ENCODE measurements at regions of chr22 and their contacts with region 1.

Region 1: DNA sequence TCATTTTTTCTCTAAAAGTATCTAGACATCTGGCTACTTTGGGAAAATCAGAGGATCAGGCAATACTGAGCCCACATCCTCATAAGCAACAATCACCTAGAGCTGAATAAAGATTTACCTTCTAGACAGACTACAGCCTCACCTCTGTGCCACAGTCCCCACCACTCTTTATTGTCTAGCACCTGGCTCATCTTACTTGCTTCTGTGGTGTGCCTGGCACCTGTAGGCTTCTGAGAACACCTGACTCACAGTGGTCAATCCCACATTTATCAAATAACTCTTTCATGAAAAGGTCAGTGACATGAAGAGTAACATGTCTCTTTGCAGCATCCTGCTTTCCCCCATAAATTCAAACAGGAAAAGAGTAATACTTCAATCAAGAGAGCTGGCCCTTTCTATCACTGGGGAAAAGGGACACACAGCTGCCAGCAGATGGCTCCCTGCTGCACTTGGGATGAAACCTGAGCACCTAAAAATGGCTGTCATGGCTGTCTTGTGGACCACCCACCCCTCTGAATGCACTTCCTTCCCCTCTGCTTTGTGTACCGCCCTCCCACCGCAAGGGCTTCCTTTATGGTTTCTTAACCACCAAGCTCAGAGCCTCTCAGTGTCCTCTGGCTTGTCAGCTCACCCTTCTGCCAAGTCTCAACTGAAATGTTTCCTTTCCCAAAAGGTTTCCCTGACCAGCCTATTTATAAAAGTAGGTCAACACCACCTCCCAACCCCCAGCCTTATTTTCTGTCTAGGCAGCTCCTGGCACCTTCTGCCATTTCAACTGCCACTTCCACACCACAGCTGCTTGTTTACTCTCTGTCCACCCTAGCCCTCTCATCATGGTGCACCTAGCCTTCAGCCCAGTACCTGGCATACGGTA is 9.3 kb downstream of the TFIP11 start:
- DNase-seq: peak; percentile 24 to 91 (median 64)
- ATAC-seq: peak; percentile 93
- H3K4me3 ChIP-seq: no peak overlapping the region
- H3K4me3 Mint-ChIP-seq: peak overlapping the region; percentile 66
- H3K27ac ChIP-seq: peak overlapping the region in 1 of 2 experiments; percentile 55
- H3K27ac Mint-ChIP-seq: peak overlapping the region; percentile 88
- H3K4me1 ChIP-seq: peaks cover 17% of the 10 kb centered on the region
- H3K4me1 Mint-ChIP-seq: peaks cover 24% of the 10 kb centered on the region
- H3K27me3 ChIP-seq: no peaks in the 10 kb centered on the region
- H3K27me3 Mint-ChIP-seq: no peaks in the 10 kb centered on the region
- CTCF ChIP-seq: peak; percentile 42

Region 2: GRCh38 chr22:26416256-26416655 is 86.7 kb before region 1 on chr22:
- CTCF ChIA-PET with region 1: no interaction called
- POLR2A ChIA-PET with region 1: no interaction called
- intact Hi-C with region 1: no loop called
- DNase-seq: no peak
- ATAC-seq: no peak
- H3K4me3 ChIP-seq: no peak overlapping the region
- H3K4me3 Mint-ChIP-seq: no peak overlapping the region
- H3K27ac ChIP-seq: no peak overlapping the region
- H3K27ac Mint-ChIP-seq: no peak overlapping the region
- H3K4me1 ChIP-seq: no peaks in the 10 kb centered on the region
- H3K4me1 Mint-ChIP-seq: no peaks in the 10 kb centered on the region
- H3K27me3 ChIP-seq: no peaks in the 10 kb centered on the region
- H3K27me3 Mint-ChIP-seq: peaks cover 20% of the 10 kb centered on the region
- CTCF ChIP-seq: no peak

Region 3: DNA sequence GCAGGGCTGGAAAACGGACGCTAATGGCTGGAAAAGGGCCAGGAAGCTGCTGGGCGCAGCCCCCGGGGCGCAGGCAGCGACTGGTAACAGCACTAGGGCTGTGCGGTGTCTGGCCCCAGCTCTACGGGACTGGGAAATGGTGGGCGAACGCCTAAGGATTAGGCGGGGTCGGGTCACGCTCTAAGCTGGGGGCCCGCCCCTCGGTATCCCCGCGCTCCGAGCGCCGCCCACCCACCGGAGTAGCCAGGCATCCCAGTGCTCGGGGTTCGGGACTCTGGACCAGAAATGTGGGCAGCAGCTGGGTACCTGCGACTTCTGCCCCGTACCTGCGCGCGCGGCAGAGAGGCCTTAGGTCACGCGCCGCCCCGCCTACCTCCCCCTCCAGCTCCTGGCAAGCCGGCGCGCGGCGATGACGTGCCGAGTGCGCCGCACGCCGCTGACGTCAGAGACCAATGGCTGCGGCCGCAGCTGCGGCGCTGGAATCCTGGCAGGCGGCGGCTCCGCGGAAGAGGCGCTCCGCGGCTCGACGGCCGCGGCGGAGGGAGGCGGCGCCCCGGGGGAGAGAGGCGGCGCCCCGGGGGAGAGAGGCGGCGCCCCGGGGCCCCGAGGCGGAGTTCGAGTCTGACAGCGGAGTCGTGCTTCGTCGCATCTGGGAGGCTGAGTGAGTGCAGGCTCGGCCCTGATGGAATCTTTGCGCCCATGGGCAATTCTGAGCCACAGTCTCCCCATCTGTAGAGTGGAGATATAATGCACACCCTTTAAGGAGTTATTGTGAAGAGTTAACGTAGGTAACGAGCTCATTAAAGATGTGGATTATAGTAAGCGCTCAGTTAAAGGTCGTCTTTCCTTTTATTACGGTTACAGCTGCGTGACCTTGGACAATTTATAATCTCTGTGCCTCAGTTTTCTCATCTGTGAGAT is 19.2 kb before region 1 on chr22 and contains the starts of genes HPS4 and SRRD:
- CTCF ChIA-PET with region 1: interaction called, 10 read pairs
- POLR2A ChIA-PET with region 1: interaction called, 12 read pairs
- intact Hi-C with region 1: no loop called
- DNase-seq: peak; percentile 87 to 97 (median 93)
- ATAC-seq: peak; percentile 83
- H3K4me3 ChIP-seq: peak within 1 kb of the TSS; percentile 78 to 97
- H3K4me3 Mint-ChIP-seq: peak within 1 kb of the TSS; percentile 95
- H3K27ac ChIP-seq: peak within 1 kb of the TSS; percentile 85 to 94
- H3K27ac Mint-ChIP-seq: peak within 1 kb of the TSS; percentile 99
- H3K4me1 ChIP-seq: peaks cover 53% of the 10 kb centered on the region
- H3K4me1 Mint-ChIP-seq: peaks cover 69% of the 10 kb centered on the region
- H3K27me3 ChIP-seq: no peaks in the 10 kb centered on the region
- H3K27me3 Mint-ChIP-seq: no peaks in the 10 kb centered on the region
- CTCF ChIP-seq: no peak
- total RNA-seq, gene HPS4: 67.0 to 71.0 TPM
- total RNA-seq, gene SRRD: 22.1 to 24.1 TPM

Region 4: GRCh38 chr22:26492220-26492619 is 10.7 kb before region 1 on chr22:
- CTCF ChIA-PET with region 1: interaction called, 19 read pairs
- POLR2A ChIA-PET with region 1: interaction called, 3 read pairs
- intact Hi-C with region 1: no loop called
- DNase-seq: no peak
- ATAC-seq: no peak
- H3K4me3 ChIP-seq: no peak overlapping the region
- H3K4me3 Mint-ChIP-seq: no peak overlapping the region
- H3K27ac ChIP-seq: no peak overlapping the region
- H3K27ac Mint-ChIP-seq: no peak overlapping the region
- H3K4me1 ChIP-seq: no peaks in the 10 kb centered on the region
- H3K4me1 Mint-ChIP-seq: no peaks in the 10 kb centered on the region
- H3K27me3 ChIP-seq: no peaks in the 10 kb centered on the region
- H3K27me3 Mint-ChIP-seq: no peaks in the 10 kb centered on the region
- CTCF ChIP-seq: no peak

Region 5: GRCh38 chr22:26524870-26525269 is 21.9 kb after region 1 on chr22:
- CTCF ChIA-PET with region 1: interaction called, 12 read pairs
- POLR2A ChIA-PET with region 1: no interaction called
- intact Hi-C with region 1: no loop called
- DNase-seq: no peak
- ATAC-seq: no peak
- H3K4me3 ChIP-seq: no peak overlapping the region
- H3K4me3 Mint-ChIP-seq: no peak overlapping the region
- H3K27ac ChIP-seq: no peak overlapping the region
- H3K27ac Mint-ChIP-seq: no peak overlapping the region
- H3K4me1 ChIP-seq: no peaks in the 10 kb centered on the region
- H3K4me1 Mint-ChIP-seq: no peaks in the 10 kb centered on the region
- H3K27me3 ChIP-seq: no peaks in the 10 kb centered on the region
- H3K27me3 Mint-ChIP-seq: no peaks in the 10 kb centered on the region
- CTCF ChIP-seq: no peak

Region 6: DNA sequence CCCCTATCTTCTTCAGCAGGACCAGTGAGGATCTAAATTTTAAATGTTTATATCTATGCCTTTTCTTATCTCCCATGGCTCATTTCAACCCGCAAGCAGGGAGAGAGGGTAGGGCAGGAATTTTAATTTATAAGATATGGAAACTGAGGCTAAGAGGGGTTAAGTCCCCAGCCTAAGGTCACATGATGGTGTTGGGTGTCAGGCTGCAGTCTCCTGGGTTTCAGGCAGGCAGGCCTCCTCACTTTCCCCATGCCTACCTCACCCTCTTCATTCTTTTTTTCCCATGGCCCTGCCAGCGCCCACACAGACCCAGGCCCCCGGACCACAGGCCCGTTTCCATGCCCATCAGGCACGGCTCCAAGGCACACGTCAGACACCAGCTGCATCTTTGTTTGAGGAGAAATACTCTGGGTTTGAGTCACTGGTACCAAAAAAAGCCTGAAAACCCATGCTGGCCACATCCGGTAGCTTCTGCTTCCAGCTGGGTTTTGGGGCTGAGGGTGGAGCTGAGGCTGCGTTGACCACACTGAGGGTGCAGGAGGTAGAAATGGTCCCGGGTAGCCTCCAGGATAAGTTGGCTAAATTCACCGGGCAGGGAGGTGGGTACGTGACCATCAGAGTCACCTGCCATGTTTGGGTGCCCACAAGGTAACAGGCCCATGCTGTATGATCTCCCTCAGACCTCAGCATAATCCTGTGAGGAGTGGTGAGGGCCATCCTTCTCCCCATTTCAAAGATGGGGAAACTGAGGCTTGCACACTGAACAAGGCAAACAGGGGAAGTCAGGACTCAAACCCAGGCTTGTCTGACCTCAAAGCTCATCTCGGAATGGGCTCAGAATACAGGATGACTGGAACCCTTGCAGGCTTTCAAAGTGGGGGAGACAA is 107.4 kb after region 1 on chr22:
- CTCF ChIA-PET with region 1: no interaction called
- POLR2A ChIA-PET with region 1: no interaction called
- intact Hi-C with region 1: no loop called
- DNase-seq: peak in 7 of 9 experiments; percentile 16 to 75 (median 43)
- ATAC-seq: peak; percentile 79
- H3K4me3 ChIP-seq: peak overlapping the region in 1 of 2 experiments; percentile 7
- H3K4me3 Mint-ChIP-seq: peak overlapping the region; percentile 37
- H3K27ac ChIP-seq: peak overlapping the region in 1 of 2 experiments; percentile 53
- H3K27ac Mint-ChIP-seq: peak overlapping the region; percentile 81
- H3K4me1 ChIP-seq: peaks cover 22% of the 10 kb centered on the region
- H3K4me1 Mint-ChIP-seq: peaks cover 22% of the 10 kb centered on the region
- H3K27me3 ChIP-seq: no peaks in the 10 kb centered on the region
- H3K27me3 Mint-ChIP-seq: no peaks in the 10 kb centered on the region
- CTCF ChIP-seq: no peak

Region 7: DNA sequence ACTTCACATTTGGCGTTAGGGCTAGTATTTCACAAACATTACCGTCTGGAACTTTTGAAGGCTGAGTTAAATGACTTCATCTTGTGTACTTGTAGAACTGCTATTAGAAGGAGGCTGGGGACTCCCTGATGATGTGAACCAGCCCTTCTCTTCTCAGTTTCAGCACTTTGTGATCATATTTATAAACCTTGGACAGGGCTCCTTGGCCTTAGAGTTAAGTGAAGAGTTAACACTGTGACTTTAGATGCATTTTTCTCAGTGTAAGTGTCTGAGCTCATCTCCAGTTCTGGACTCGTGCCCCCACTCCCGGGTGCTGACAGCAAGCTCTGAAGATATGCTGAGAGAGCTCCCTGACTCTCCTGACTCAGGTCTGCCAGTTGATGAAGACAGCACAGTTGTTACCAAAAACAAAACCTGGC is 162.9 kb after region 1 on chr22:
- CTCF ChIA-PET with region 1: interaction called, 40 read pairs
- POLR2A ChIA-PET with region 1: interaction called, 5 read pairs
- intact Hi-C with region 1: loop called (anchors 1 kb)
- DNase-seq: no peak
- ATAC-seq: no peak
- H3K4me3 ChIP-seq: no peak overlapping the region
- H3K4me3 Mint-ChIP-seq: no peak overlapping the region
- H3K27ac ChIP-seq: peak overlapping the region in 1 of 2 experiments; percentile 87
- H3K27ac Mint-ChIP-seq: peak overlapping the region; percentile 89
- H3K4me1 ChIP-seq: peaks cover 39% of the 10 kb centered on the region
- H3K4me1 Mint-ChIP-seq: peaks cover 43% of the 10 kb centered on the region
- H3K27me3 ChIP-seq: no peaks in the 10 kb centered on the region
- H3K27me3 Mint-ChIP-seq: no peaks in the 10 kb centered on the region
- CTCF ChIP-seq: peak; percentile 37

Region 8: DNA sequence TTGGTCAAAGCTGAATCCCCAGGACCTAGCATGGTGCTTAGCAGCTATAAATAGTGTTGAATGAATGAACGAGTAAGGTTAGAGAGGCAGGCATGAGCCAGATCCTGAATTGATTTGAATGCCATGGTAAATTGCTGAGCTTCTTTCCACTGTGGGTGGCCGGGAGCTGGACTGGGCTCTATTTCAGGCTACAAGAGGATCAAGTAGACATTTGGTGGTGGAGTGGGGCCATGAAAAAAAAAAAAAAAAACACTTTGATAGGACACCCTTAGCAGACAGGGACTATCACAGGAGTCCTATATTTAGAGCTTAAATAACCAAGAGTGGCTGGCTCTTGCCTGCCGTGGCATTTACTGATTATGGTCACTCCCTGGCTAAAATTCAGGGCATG is 232.1 kb after region 1 on chr22:
- CTCF ChIA-PET with region 1: no interaction called
- POLR2A ChIA-PET with region 1: no interaction called
- intact Hi-C with region 1: no loop called
- DNase-seq: no peak
- ATAC-seq: no peak
- H3K4me3 ChIP-seq: no peak overlapping the region
- H3K4me3 Mint-ChIP-seq: no peak overlapping the region
- H3K27ac ChIP-seq: no peak overlapping the region
- H3K27ac Mint-ChIP-seq: no peak overlapping the region
- H3K4me1 ChIP-seq: no peaks in the 10 kb centered on the region
- H3K4me1 Mint-ChIP-seq: peaks cover 2% of the 10 kb centered on the region
- H3K27me3 ChIP-seq: no peaks in the 10 kb centered on the region
- H3K27me3 Mint-ChIP-seq: no peaks in the 10 kb centered on the region
- CTCF ChIP-seq: no peak